ENCODE measurements at regions of chr4 and their contacts with region 1.

Region 1: GRCh38 chr4:94739741-94740140 is 18.0 kb upstream of the BMPR1B start:
- DNase-seq: no peak
- ATAC-seq: no peak
- H3K4me3 ChIP-seq: no peak overlapping the region
- H3K27ac ChIP-seq: no peak overlapping the region
- H3K4me1 ChIP-seq: no peaks in the 10 kb centered on the region
- H3K27me3 ChIP-seq: no peaks in the 10 kb centered on the region
- CTCF ChIP-seq: no peak

Region 2: DNA sequence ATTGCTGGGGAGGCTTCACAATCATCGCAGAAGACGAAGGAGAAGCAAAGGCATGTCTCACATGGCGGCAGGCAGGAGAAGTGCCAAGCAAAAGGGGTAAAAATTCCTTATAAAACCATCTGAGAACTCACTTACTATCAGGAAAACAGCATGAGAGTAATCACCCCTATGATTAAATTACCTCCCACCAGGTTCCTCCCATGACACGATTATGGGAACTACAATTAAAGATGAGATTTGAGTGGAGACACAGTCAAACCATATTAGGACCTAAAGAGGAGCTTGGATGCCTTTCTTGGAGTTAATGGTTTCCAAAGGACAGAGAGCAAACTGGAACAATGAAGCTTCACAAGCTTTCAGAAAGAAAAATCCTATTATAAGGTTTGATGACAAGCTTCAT is 700.5 kb before region 1 on chr4:
- CTCF ChIA-PET with region 1: no interaction called
- POLR2A ChIA-PET with region 1: no interaction called
- in situ Hi-C with region 1: no loop called
- intact Hi-C with region 1: no loop called
- DNase-seq: no peak
- ATAC-seq: no peak
- H3K4me3 ChIP-seq: no peak overlapping the region
- H3K27ac ChIP-seq: no peak overlapping the region
- H3K4me1 ChIP-seq: no peaks in the 10 kb centered on the region
- H3K27me3 ChIP-seq: no peaks in the 10 kb centered on the region
- CTCF ChIP-seq: no peak

Region 3: DNA sequence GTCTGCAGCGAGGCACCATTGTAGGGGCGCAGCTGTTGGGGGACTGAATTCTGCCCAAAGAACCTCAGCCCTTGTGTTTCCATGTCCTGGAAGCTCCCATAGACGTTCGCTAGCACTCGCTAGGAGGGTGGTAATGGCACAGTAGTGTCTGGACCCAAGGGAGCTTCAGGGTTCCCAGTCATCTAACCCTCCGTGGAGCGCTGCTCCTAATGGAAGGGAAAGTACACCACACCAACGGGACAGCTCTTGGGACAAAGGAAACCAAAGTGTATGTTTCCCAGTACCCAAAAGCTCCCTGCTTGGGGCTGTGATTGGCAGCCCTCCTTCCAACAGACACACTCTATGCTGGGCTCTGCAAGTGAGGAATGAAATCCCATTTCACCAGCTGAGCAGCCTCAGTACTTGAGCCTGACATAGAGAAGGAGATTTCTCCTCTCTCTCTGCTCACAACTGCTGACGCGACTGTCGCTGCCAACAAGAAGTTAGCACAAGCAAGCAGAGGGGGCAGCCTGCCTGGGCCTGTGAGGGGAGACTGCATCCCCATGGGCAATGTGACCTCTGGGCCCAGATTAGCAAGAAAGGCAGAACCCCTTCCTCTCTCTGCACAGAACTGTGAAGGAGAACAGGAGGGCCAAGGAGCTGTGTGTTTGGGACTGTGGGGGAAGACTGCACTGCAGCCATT is 599.7 kb before region 1 on chr4:
- CTCF ChIA-PET with region 1: no interaction called
- POLR2A ChIA-PET with region 1: no interaction called
- in situ Hi-C with region 1: no loop called
- intact Hi-C with region 1: no loop called
- DNase-seq: no peak
- ATAC-seq: no peak
- H3K4me3 ChIP-seq: no peak overlapping the region
- H3K27ac ChIP-seq: no peak overlapping the region
- H3K4me1 ChIP-seq: no peaks in the 10 kb centered on the region
- H3K27me3 ChIP-seq: no peaks in the 10 kb centered on the region
- CTCF ChIP-seq: no peak

Region 4: DNA sequence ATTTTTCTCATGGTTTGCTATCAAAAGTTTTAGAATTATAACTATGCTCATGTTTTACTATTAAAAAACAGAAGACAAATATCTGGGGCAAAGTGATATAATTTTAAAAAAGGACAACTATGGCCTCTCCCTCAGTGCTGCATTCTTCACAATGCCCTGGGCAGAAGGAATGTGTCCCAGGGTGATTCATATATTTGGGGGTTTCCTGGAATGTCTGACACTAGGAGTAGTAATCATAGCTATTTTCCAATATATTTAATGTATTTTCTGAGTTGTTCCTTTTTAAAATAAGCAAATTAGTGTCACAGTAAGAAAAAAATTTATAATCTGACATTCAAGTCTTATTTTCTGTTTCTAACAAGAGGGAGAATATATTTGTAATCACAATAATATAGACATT is 527.3 kb after region 1 on chr4:
- CTCF ChIA-PET with region 1: no interaction called
- POLR2A ChIA-PET with region 1: no interaction called
- in situ Hi-C with region 1: no loop called
- intact Hi-C with region 1: no loop called
- DNase-seq: no peak
- ATAC-seq: no peak
- H3K4me3 ChIP-seq: no peak overlapping the region
- H3K27ac ChIP-seq: no peak overlapping the region
- H3K4me1 ChIP-seq: no peaks in the 10 kb centered on the region
- H3K27me3 ChIP-seq: no peaks in the 10 kb centered on the region
- CTCF ChIP-seq: no peak

Region 5: DNA sequence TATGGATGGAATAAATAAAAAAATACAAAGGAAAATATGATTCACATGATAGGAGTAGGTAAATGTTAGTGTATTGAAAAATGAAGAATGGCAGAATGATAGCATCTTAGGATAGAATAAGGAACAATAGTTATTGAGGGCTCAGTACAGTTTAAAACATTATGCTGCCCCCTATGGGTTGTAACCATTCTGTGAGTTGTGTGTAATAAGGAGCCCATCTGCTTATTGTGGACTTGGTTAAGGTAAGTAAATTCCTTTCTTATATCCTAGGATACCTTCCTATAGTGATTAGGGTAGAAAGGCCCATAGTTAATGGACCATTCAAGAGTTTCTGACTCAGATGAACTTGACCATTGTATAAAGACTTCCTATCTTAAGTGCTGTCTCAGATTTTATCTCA is 1296.0 kb after region 1 on chr4:
- CTCF ChIA-PET with region 1: no interaction called
- POLR2A ChIA-PET with region 1: no interaction called
- in situ Hi-C with region 1: no loop called
- intact Hi-C with region 1: no loop called
- DNase-seq: no peak
- ATAC-seq: no peak
- H3K4me3 ChIP-seq: no peak overlapping the region
- H3K27ac ChIP-seq: no peak overlapping the region
- H3K4me1 ChIP-seq: no peaks in the 10 kb centered on the region
- H3K27me3 ChIP-seq: no peaks in the 10 kb centered on the region
- CTCF ChIP-seq: no peak; the same call in 1 of the 2 replicates

Region 6: GRCh38 chr4:96509039-96509741 is 1769.4 kb after region 1 on chr4:
- CTCF ChIA-PET with region 1: no interaction called
- POLR2A ChIA-PET with region 1: interaction called, 12 read pairs
- in situ Hi-C with region 1: no loop called
- intact Hi-C with region 1: no loop called
- DNase-seq: no peak
- ATAC-seq: no peak
- H3K4me3 ChIP-seq: no peak overlapping the region
- H3K27ac ChIP-seq: no peak overlapping the region
- H3K4me1 ChIP-seq: no peaks in the 10 kb centered on the region
- H3K27me3 ChIP-seq: no peaks in the 10 kb centered on the region
- CTCF ChIP-seq: no peak

Measured in Panc1 (cell line).